CD8-positive, alpha-beta T cell (primary cell): ENCODE measurements at regions of chr2 and their contacts with region 1.

Region 1: DNA sequence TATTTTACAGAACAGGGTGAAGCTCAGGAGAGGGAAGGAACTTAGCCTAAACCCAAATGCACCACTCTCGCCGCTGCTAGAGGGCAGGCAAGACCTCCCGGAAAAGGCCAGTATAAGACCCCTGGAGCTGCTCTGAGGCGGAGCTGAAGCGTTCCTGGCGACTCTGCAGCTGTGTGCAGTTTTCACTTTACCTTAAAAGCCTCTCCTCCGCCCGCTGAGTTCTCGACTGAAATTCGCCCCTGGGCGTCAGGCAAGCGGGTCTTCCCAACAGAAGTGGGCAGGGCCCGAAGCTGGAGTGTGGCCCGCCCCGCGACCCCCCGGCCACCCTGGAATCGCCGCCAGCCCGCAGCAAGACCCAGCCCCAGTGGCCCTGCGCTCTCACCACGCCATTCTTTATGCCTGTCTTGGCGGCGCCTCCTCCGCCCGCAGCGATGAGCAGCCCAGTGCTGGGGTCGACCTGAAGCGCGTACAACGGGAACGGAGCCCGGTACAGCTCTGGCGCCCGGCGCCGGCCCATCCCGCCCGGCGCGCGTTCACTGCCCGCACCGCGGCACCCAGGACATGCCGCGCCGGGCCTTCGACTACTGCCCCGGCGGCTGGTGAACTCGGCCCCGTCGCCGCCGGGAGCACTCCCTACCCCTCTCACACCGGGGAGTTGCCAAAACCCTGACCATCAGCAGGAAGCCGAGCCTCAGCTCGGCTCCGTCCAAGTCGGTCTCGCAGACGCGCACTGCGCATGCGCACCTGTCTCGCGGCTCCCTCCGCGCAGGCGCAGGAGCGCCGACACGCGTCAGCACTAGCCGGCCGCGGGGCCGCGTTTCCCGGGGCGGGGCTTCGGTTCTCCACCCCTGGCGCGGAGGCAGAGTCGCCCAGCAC is at the start of gene PREB:
- DNase-seq: peak; percentile 96 to 99 (median 98)
- ATAC-seq: peak; percentile 97
- H3K4me3 ChIP-seq: peak within 1 kb of the TSS; percentile 86 to 99
- H3K4me3 Mint-ChIP-seq: peak within 1 kb of the TSS; percentile 95
- H3K27ac ChIP-seq: peak within 1 kb of the TSS; percentile 78 to 92
- H3K27ac Mint-ChIP-seq: peak within 1 kb of the TSS; percentile 97
- H3K4me1 ChIP-seq: peaks cover 14% of the 10 kb centered on the region
- H3K4me1 Mint-ChIP-seq: peaks cover 18% of the 10 kb centered on the region
- H3K27me3 ChIP-seq: no peaks in the 10 kb centered on the region
- H3K27me3 Mint-ChIP-seq: no peaks in the 10 kb centered on the region
- CTCF ChIP-seq: no peak
- total RNA-seq, gene PREB: 9.0 to 10.1 TPM

Region 2: GRCh38 chr2:27014771-27015433 is 119.2 kb before region 1 on chr2:
- CTCF ChIA-PET with region 1: no interaction called
- POLR2A ChIA-PET with region 1: no interaction called
- intact Hi-C with region 1: no loop called
- DNase-seq: no peak
- ATAC-seq: no peak
- H3K4me3 ChIP-seq: no peak overlapping the region
- H3K4me3 Mint-ChIP-seq: no peak overlapping the region
- H3K27ac ChIP-seq: no peak overlapping the region
- H3K27ac Mint-ChIP-seq: no peak overlapping the region
- H3K4me1 ChIP-seq: no peaks in the 10 kb centered on the region
- H3K4me1 Mint-ChIP-seq: no peaks in the 10 kb centered on the region
- H3K27me3 ChIP-seq: no peaks in the 10 kb centered on the region
- H3K27me3 Mint-ChIP-seq: peaks cover 5% of the 10 kb centered on the region
- CTCF ChIP-seq: no peak

Region 3: DNA sequence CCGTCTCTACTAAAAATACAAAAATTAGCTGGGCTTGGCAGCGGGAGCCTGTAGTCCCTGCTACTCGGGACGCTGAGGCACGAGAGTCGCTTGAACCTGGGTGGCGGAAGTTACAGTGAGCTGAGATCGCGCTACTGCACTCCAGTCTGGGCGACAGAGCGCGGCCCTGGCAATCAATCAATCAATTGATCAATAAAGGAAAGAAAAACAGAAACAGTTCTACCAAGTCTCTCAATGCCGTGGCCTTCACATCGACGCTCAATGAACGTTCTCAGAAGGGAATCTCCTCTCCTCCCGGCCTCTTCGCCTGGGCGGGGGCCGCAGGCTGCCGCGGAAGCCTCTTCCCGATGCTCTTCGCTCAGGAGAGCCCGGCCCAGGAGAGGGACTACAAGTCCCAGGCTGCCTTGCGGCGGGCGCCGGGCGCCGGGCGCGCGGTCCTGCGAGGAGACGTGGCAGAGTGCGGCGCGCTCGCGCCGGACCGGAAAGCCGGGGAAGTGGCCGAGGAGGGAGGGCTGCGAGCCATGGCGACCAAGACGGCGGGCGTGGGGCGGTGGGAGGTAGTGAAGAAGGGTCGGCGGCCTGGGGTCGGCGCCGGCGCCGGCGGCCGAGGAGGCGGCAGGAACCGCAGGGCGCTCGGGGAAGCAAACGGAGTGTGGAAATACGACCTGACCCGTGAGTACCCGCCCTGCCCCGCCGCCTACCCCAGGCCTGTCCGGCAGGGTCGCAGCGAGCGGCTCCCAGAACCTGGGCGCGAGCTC is 101.5 kb before region 1 on chr2 and contains the start of gene TMEM214:
- CTCF ChIA-PET with region 1: no interaction called
- POLR2A ChIA-PET with region 1: no interaction called
- intact Hi-C with region 1: loop called (anchors 1 kb)
- DNase-seq: peak; percentile 44 to 87 (median 77)
- ATAC-seq: peak; percentile 94
- H3K4me3 ChIP-seq: peak within 1 kb of the TSS; percentile 84 to 97
- H3K4me3 Mint-ChIP-seq: peak within 1 kb of the TSS; percentile 95
- H3K27ac ChIP-seq: peak within 1 kb of the TSS; percentile 67 to 78
- H3K27ac Mint-ChIP-seq: peak within 1 kb of the TSS; percentile 91
- H3K4me1 ChIP-seq: peaks cover 20% of the 10 kb centered on the region
- H3K4me1 Mint-ChIP-seq: peaks cover 39% of the 10 kb centered on the region
- H3K27me3 ChIP-seq: no peaks in the 10 kb centered on the region
- H3K27me3 Mint-ChIP-seq: no peaks in the 10 kb centered on the region
- CTCF ChIP-seq: no peak
- total RNA-seq, gene TMEM214: 26.5 to 27.4 TPM

Region 4: DNA sequence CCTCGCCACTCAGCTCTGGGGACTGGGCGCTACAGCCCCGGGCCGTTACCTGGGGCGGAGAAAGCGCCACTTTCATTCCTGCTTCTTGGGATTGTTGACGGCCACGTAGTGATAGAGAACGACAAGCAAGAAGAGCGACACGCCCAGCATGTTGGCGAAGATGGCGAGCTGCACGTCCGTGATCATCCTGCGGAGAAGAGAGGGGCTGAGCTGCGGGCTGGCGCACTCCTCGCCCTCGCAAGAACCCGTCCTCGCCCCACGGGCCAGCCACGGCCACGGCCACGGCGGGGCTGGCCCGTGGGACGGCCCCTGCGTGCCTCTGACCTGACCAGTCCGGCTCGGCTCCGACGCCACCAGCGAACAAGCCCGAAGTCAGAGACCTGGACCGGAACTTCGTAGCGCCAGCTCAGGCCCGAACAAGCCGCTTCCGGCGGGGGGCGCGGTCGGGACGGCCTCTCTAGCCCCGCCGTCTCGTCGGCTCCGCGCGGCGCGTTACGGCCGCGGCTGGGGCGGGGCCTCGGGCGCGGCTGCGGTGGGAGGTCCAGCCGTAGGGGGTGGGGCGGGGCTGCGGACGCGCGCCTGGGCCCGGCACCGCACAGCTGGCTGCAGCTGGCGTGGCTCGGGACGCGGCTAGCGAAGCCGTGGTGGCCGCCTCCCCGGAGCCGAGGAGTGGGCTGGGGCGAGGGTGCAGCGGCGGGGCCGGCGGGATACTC is 62.7 kb before region 1 on chr2 and contains the start of gene OST4:
- CTCF ChIA-PET with region 1: no interaction called
- POLR2A ChIA-PET with region 1: no interaction called
- intact Hi-C with region 1: loop called in 1 of 2 experiments (anchors 1 kb)
- DNase-seq: peak; percentile 74 to 94 (median 88)
- ATAC-seq: peak; percentile 88
- H3K4me3 ChIP-seq: peak within 1 kb of the TSS; percentile 84 to 93
- H3K4me3 Mint-ChIP-seq: peak within 1 kb of the TSS; percentile 98
- H3K27ac ChIP-seq: peak within 1 kb of the TSS; percentile 92 to 98
- H3K27ac Mint-ChIP-seq: peak within 1 kb of the TSS; percentile 98
- H3K4me1 ChIP-seq: peaks cover 46% of the 10 kb centered on the region
- H3K4me1 Mint-ChIP-seq: peaks cover 76% of the 10 kb centered on the region
- H3K27me3 ChIP-seq: no peaks in the 10 kb centered on the region
- H3K27me3 Mint-ChIP-seq: no peaks in the 10 kb centered on the region
- CTCF ChIP-seq: no peak
- total RNA-seq, gene OST4: 252 to 260 TPM

Region 5: GRCh38 chr2:27123302-27124231 is 10.6 kb before region 1 on chr2 and contains the start of gene ABHD1:
- CTCF ChIA-PET with region 1: interaction called, 5 read pairs
- POLR2A ChIA-PET with region 1: interaction called, 52 read pairs
- intact Hi-C with region 1: loop called (anchors 1 kb)
- DNase-seq: peak; percentile 19 to 82 (median 68)
- ATAC-seq: peak; percentile 83
- H3K4me3 ChIP-seq: peak within 1 kb of the TSS; percentile 41 to 68
- H3K4me3 Mint-ChIP-seq: peak within 1 kb of the TSS; percentile 92
- H3K27ac ChIP-seq: peak within 1 kb of the TSS in 1 of 2 experiments; percentile 62
- H3K27ac Mint-ChIP-seq: peak within 1 kb of the TSS; percentile 81
- H3K4me1 ChIP-seq: peaks cover 14% of the 10 kb centered on the region
- H3K4me1 Mint-ChIP-seq: peaks cover 22% of the 10 kb centered on the region
- H3K27me3 ChIP-seq: peaks cover under 1 to 4% of the 10 kb centered on the region in 2 experiments
- H3K27me3 Mint-ChIP-seq: peaks cover 13% of the 10 kb centered on the region
- CTCF ChIP-seq: no peak
- total RNA-seq, gene ABHD1: 0.67 to 1.0 TPM

Region 6: DNA sequence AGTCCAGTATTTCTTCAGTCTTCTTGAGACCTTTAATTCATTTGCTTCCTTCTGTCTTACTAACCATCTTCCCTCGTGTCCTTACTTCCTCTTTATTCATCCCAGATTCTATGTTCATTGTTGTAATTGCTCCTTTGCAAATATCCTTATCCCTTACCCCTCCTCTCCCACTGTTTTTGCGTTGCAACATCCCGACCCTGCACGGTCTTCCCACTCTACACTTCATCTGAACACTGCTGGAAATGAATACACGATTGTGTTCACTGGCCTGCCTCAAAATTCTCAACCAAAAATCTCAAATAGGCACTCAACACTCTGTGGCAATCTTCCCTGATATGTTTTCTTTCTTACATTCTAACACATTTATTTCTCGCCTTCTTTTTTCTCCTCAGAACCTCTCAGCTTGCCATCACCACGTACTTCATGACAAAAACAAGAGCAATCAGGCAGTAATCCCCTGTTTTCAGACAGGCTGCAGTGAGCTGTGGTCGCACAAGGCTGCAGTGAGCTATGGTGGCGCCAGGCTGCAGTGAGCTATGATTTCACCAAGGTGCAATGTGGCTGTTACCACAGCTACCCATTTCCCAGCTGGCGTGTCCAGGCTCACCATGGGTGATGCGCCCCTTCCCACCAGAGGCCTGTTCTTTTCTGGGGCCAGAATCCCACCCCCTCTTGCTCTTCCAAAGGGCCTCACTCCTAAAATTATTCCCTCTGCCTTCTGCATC is 40.3 kb after region 1 on chr2:
- CTCF ChIA-PET with region 1: no interaction called
- POLR2A ChIA-PET with region 1: no interaction called
- intact Hi-C with region 1: no loop called
- DNase-seq: no peak
- ATAC-seq: no peak
- H3K4me3 ChIP-seq: no peak overlapping the region
- H3K4me3 Mint-ChIP-seq: no peak overlapping the region
- H3K27ac ChIP-seq: no peak overlapping the region
- H3K27ac Mint-ChIP-seq: no peak overlapping the region
- H3K4me1 ChIP-seq: peaks cover 5% of the 10 kb centered on the region
- H3K4me1 Mint-ChIP-seq: peaks cover 5% of the 10 kb centered on the region
- H3K27me3 ChIP-seq: peaks cover 0 to 5% of the 10 kb centered on the region in 2 experiments
- H3K27me3 Mint-ChIP-seq: peaks cover 25% of the 10 kb centered on the region
- CTCF ChIP-seq: no peak

Region 7: DNA sequence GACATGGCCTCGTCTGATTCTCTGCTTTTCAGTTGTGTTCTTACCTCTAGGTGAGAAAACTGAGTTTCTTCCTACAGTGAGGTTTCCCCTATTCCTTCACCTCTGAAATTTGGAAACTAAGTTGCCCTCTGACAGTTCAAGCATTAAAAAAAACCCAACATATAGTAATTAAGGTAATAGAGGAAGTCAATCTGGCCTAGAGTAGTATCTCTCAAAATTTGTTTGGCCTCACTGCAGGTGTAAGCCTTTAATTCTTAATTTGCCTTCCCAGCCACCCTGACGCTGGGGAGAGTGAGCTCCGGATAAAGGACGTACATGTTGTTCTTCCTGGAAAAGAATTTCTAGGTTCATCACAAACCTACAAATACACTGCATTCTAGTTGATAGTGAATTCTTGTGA is 84.5 kb after region 1 on chr2:
- CTCF ChIA-PET with region 1: no interaction called
- POLR2A ChIA-PET with region 1: no interaction called
- intact Hi-C with region 1: no loop called
- DNase-seq: no peak
- ATAC-seq: no peak
- H3K4me3 ChIP-seq: no peak overlapping the region
- H3K4me3 Mint-ChIP-seq: peak overlapping the region; percentile 96
- H3K27ac ChIP-seq: no peak overlapping the region
- H3K27ac Mint-ChIP-seq: no peak overlapping the region
- H3K4me1 ChIP-seq: peaks cover 17% of the 10 kb centered on the region
- H3K4me1 Mint-ChIP-seq: peaks cover 34% of the 10 kb centered on the region
- H3K27me3 ChIP-seq: no peaks in the 10 kb centered on the region
- H3K27me3 Mint-ChIP-seq: no peaks in the 10 kb centered on the region
- CTCF ChIP-seq: no peak

Region 8: DNA sequence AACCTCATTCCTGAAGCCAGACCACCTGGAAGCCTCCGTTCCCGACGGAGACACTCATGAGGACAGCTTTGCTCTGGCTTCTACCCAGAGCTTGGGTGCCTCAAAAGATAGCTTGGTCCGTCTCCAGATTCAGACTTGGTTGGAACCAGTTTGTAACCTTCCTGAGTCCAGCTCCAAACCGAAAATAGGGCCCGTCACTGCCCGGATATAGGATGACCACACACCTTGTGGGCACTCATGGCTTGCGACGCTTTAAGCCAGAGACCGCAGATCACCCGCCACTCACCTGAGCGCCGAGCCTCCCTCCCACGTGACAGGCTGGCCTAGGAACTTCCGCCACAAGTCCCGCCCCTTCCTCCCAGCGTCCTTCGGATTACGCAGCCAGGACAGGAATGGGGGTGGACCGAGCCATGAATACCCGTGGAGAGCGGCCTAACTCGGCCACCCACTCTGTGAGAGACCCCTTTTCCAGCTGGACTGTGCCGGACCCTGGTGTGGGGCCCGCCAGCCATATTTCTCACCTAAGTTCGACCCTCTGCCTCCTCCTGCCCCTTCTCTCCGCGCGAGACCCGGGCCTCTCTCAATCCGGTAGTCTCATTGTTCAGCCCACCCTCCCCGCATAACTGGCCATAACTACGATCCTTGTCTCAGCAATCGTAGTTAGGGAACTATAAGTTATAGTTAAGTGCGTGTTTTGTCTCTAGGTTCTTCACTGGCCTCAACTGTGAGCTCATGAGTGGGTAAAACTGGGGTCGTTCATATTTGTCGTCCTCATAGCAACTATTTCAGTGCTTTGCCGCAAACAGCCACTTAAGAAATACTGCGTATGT is 188.8 kb after region 1 on chr2 and contains the start of gene MPV17:
- CTCF ChIA-PET with region 1: no interaction called
- POLR2A ChIA-PET with region 1: no interaction called
- intact Hi-C with region 1: loop called in 1 of 2 experiments (anchors 1 kb)
- DNase-seq: peak; percentile 65 to 93 (median 87)
- ATAC-seq: peak; percentile 96
- H3K4me3 ChIP-seq: peak within 1 kb of the TSS; percentile 80 to 81
- H3K4me3 Mint-ChIP-seq: peak within 1 kb of the TSS; percentile 99
- H3K27ac ChIP-seq: peak within 1 kb of the TSS; percentile 89 to 94
- H3K27ac Mint-ChIP-seq: peak within 1 kb of the TSS; percentile 99
- H3K4me1 ChIP-seq: peaks cover 9% of the 10 kb centered on the region
- H3K4me1 Mint-ChIP-seq: peaks cover 25% of the 10 kb centered on the region
- H3K27me3 ChIP-seq: no peaks in the 10 kb centered on the region
- H3K27me3 Mint-ChIP-seq: no peaks in the 10 kb centered on the region
- CTCF ChIP-seq: no peak
- total RNA-seq, gene MPV17: 23.6 to 26.0 TPM

Region 9: DNA sequence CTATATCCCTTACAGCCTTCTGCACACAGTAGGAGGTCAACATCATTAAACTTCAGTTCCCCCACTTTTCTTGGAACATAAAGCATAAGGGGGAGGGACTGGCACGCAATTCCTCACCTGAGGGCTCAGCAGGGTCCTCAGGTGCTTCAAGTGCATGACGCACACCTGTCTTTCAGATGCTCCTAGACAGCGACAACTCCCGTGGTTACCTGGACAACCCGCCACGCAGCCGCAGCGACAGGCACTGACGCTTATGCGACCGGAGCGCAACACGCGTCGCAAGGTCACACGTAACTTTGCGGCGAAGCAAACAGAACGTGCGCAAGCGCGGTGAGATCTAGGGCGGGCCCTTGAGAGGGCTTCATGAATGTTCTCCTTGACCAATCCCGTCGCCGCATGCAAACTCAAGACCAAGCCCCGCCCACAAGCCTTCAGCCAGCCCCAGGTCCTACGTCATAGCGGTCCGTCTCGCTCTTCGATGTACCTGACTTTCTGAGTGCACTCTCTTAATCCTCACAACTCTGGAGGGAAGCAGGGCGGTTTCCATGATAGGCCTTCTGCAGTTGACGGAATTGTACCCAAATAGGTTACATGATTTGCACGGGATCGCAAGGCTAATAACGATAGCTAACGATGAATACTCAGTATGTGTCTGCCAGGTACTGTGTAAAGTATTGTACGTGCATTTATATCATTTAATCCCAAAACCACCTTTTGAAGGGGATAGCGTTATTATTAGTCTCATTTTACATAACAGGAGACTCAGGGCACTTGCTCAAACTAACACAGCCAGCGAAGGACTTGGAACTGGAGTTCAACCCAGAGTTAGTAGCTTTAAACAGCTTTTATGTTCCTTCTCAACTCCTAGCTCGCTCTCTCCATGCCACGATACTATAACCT is 355.6 kb after region 1 on chr2 and contains the start of gene IFT172:
- CTCF ChIA-PET with region 1: no interaction called
- POLR2A ChIA-PET with region 1: no interaction called
- intact Hi-C with region 1: loop called in 1 of 2 experiments (anchors 5 kb)
- DNase-seq: peak; percentile 98 to 100 (median 99)
- ATAC-seq: peak; percentile 91
- H3K4me3 ChIP-seq: peak within 1 kb of the TSS; percentile 53 to 57
- H3K4me3 Mint-ChIP-seq: peak within 1 kb of the TSS; percentile 82
- H3K27ac ChIP-seq: peak within 1 kb of the TSS; percentile 85 to 90
- H3K27ac Mint-ChIP-seq: peak within 1 kb of the TSS; percentile 94
- H3K4me1 ChIP-seq: peaks cover 20% of the 10 kb centered on the region
- H3K4me1 Mint-ChIP-seq: peaks cover 21% of the 10 kb centered on the region
- H3K27me3 ChIP-seq: peaks cover 7 to 10% of the 10 kb centered on the region in 2 experiments
- H3K27me3 Mint-ChIP-seq: peaks cover 13% of the 10 kb centered on the region
- CTCF ChIP-seq: no peak
- total RNA-seq, gene IFT172: 15.0 to 17.2 TPM

Region 10: GRCh38 chr2:27552941-27553340 is 418.8 kb after region 1 on chr2:
- CTCF ChIA-PET with region 1: no interaction called
- POLR2A ChIA-PET with region 1: no interaction called
- intact Hi-C with region 1: no loop called
- DNase-seq: no peak
- ATAC-seq: no peak
- H3K4me3 ChIP-seq: no peak overlapping the region
- H3K4me3 Mint-ChIP-seq: no peak overlapping the region
- H3K27ac ChIP-seq: no peak overlapping the region
- H3K27ac Mint-ChIP-seq: no peak overlapping the region
- H3K4me1 ChIP-seq: no peaks in the 10 kb centered on the region
- H3K4me1 Mint-ChIP-seq: no peaks in the 10 kb centered on the region
- H3K27me3 ChIP-seq: peaks cover 0 to 2% of the 10 kb centered on the region in 2 experiments
- H3K27me3 Mint-ChIP-seq: peaks cover 10% of the 10 kb centered on the region
- CTCF ChIP-seq: no peak